Heart left ventricle (tissue), 16 donors: ENCODE measurements at regions of chr11 and their contacts with region 1.

Region 1: DNA sequence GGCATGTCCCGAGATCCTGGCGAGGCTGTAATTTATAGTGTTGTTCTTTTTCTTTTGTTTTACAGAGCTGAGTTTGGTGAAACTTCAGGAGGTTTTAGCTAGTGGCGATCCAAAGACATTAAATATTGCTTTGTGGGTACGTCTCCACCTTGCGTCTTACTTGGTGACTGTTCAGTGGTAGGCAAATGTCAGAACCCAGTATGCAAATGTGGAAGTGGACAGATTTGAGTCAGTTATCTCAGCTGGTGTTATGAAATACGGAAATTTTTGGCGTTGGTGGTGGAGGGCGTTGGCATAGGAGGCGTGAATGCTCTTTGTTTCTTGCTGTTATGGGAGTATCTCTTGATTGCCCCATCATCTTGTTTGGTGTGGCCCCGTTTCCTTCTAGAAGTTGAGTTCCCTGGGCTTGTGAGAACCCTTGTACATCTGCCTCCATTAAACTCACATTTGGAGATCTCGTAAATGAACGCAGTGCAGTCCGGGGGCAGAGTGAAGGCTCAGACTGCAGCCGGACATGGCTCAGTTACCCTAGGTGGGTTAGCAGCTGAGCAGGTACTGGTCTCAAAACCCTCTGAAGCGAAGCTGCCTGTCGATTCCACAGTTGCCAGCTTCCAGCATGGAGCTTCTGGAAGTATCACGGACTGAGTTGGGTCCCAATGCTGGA is 39.9 kb downstream of the PTPRJ start:
- DNase-seq: no peak
- ATAC-seq: peak in 3 of 4 donors; percentile 33 to 61 (median 56)
- H3K4me3 ChIP-seq: no peak overlapping the region
- H3K27ac ChIP-seq: peak overlapping the region in 1 of 12 donors; percentile 81
- H3K4me1 ChIP-seq: peaks cover 0 to 89% (median 0%) of the 10 kb centered on the region in 12 donors
- H3K27me3 ChIP-seq: no peaks in the 10 kb centered on the region
- CTCF ChIP-seq: no peak
- POLR2A ChIP-seq: no peak

Region 2: DNA sequence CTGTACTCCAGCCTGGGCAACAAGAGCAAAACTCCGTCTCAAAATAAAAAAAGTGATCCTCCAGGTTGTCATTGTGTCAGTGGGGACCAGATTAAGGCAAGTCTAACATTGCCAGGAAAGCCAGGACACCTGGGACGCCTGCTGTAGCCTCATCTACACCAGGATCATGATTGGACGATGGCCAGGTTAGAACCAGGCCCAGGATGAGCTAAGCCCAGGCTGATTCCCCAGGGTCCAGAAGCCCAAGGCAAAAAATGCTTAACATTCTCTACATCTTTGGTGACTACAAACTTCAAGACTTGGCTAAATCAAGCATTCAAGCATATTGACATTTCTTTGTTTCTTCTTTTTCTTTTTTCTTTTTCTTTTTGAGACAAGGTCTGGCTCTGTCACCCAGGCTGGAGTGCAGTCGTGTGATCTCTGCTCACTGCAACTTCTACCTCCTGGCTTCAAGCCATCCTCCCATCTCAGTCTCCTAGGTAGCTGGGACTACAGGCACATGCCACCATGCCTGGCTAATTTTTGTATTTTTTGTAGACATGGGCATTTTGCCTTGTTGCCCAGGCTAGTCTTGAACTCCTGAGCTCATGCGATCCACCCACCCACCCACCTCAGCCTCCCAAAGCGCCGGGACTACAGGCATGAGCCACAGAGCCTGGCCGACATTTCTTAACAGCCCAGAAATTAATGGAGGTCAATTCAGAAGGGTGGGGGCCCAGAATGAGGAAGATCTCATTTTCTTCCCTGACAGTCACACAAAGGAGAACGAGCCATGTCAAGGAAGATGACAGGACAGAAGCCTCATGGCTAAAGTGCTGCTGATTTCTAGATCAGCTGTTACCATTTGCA is 52.4 kb before region 1 on chr11:
- intact Hi-C with region 1: loop called in 1 of 10 experiments (anchors 10 kb)
- DNase-seq: no peak
- ATAC-seq: no peak
- H3K4me3 ChIP-seq: no peak overlapping the region
- H3K27ac ChIP-seq: no peak overlapping the region
- H3K4me1 ChIP-seq: no peaks in the 10 kb centered on the region
- H3K27me3 ChIP-seq: no peaks in the 10 kb centered on the region
- CTCF ChIP-seq: no peak
- POLR2A ChIP-seq: no peak

Region 3: DNA sequence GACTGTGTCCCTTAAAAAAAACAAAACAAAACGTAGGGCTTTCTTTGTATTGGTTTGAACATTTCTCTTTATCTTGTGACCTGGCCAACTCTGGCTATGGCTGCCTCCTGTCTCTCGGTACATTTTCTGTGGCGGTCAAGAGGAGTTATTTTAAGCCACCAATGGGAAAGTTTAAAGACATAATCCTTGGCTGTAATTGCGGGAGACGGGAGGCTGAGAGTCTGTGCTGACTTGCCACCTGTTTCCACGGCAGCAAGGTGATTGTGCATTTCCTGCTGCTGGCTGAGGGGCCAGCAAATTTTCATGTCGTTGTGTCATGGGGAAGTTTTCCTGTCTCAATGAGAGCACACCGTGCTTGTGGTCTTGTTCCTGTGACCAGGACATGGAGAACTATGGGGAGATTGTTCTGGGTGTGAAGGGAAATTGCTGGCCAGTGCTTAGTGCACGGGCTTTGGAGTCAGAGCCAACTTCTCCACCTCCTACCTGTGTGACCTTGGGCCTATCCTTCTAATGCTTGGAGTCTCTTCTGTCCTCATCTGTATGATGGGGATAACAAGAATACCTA is 28.9 kb before region 1 on chr11:
- intact Hi-C with region 1: no loop called
- DNase-seq: peak in 2 of 5 donors; percentile 33 to 64
- ATAC-seq: peak; percentile 81 to 88 (median 82)
- H3K4me3 ChIP-seq: peak overlapping the region in 4 of 12 donors; percentile 14 to 30 (median 23)
- H3K27ac ChIP-seq: peak overlapping the region; percentile 43 to 89 (median 70)
- H3K4me1 ChIP-seq: peaks cover 0 to 70% (median 7%) of the 10 kb centered on the region in 12 donors
- H3K27me3 ChIP-seq: no peaks in the 10 kb centered on the region
- CTCF ChIP-seq: no peak
- POLR2A ChIP-seq: peak in 1 of 2 donors; percentile 19